ENCODE measurements at regions of chr1 and their contacts with region 1.

Region 1: DNA sequence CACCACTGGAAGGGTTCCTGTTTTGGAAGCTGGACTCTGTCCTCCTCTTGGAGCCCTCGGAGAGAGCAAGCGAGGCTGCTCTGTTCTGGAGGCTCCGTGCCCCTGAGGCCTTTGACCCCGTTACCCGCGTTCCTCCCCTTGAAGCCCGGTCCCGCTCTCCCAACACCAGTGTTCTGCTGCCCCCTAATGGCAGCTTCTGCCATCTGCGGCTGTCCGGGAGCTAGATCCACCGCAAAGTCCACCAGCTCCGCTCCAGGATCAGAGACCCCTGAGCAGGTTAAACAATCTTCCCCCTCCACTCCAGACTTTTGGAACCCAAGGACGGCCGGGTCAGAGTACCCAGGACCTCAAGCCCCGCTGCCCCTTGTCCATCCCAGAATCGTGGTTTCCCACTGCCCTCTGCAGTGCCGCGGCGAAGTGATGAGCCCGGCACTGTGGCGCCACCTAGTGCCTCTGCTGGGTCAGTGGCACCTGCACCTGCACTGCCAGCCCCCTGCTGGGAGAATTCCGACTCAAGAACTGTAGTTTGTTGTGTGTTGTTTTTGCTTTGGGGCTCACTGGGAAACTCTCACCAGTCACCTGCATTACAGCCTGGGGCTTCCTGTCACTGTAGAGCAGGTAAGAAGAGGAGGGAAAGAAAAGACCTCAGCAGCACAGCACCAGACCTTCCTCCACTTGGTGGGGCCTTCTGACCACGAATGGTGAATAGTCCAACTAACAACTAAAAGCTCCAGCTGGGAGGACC is 63.5 kb upstream of the NFASC start:
- DNase-seq: peak; percentile 68 to 91 (median 77)
- ATAC-seq: peak; percentile 95
- H3K4me3 ChIP-seq: peak overlapping the region; percentile 59
- H3K4me3 Mint-ChIP-seq: peak overlapping the region; percentile 92
- H3K27ac ChIP-seq: no peak overlapping the region
- H3K27ac Mint-ChIP-seq: no peak overlapping the region
- H3K4me1 ChIP-seq: peaks cover 20% of the 10 kb centered on the region
- H3K4me1 Mint-ChIP-seq: peaks cover 6% of the 10 kb centered on the region
- H3K27me3 ChIP-seq: no peaks in the 10 kb centered on the region
- H3K27me3 Mint-ChIP-seq: no peaks in the 10 kb centered on the region
- CTCF ChIP-seq: peak; percentile 100

Region 2: GRCh38 chr1:204151552-204152309 is 655.4 kb before region 1 on chr1 and contains the start of gene ETNK2:
- CTCF ChIA-PET with region 1: no interaction called
- POLR2A ChIA-PET with region 1: no interaction called
- intact Hi-C with region 1: loop called in 1 of 2 experiments (anchors 10 kb)
- DNase-seq: peak; percentile 22 to 81 (median 48)
- ATAC-seq: peak; percentile 86
- H3K4me3 ChIP-seq: peak within 1 kb of the TSS; percentile 65
- H3K4me3 Mint-ChIP-seq: peak within 1 kb of the TSS; percentile 81
- H3K27ac ChIP-seq: no peak within 1 kb of the TSS
- H3K27ac Mint-ChIP-seq: peak within 1 kb of the TSS; percentile 49
- H3K4me1 ChIP-seq: peaks cover 18% of the 10 kb centered on the region
- H3K4me1 Mint-ChIP-seq: peaks cover 11% of the 10 kb centered on the region
- H3K27me3 ChIP-seq: peaks cover 0 to 7% of the 10 kb centered on the region in 2 experiments
- H3K27me3 Mint-ChIP-seq: peaks cover 6% of the 10 kb centered on the region
- CTCF ChIP-seq: no peak
- total RNA-seq, gene ETNK2: 11.7 to 12.9 TPM

Region 3: DNA sequence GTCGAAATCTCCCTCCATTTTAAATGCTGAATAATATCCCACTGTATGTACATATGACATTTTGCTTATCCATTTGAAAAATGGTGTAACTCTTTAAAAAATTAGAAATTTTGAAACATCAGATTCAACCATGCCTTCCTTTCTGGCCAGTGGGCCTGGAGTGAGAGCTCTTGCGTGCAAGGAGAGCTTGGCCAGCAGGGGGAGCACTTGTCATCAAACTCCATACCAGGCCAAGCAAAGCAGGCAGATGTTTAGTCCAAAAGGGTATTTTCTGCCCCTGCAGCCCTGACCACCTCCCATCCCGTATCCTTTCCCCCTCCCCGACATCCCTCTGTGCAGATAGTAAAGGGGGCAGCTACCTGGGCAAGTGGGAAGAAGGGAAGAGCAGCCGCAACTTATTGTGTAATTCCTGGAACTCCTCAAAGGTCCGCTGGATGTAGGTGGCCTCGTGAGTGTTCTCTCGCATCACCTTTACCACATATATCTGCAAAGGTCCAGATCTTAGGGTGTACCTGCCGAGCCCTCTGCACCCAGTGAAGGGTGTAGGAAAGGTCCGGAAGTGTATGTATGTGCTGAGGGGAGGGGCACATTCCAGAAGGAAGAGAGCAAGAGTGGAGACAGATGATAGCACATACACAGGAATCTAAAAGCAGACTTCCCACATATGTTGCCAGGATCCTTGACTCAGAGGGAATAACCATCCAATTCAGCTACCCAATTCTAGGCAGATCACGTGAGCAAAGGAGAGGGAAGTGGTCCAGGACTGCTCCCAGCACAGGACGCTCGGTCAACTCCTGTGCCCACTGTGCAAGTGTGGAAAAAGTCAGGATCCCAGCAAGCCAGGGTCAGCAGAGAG is 375.6 kb before region 1 on chr1:
- CTCF ChIA-PET with region 1: interaction called, 9 read pairs
- POLR2A ChIA-PET with region 1: no interaction called
- intact Hi-C with region 1: loop called (anchors 1 to 5 kb)
- DNase-seq: peak; percentile 68 to 90 (median 76)
- ATAC-seq: peak; percentile 90
- H3K4me3 ChIP-seq: no peak overlapping the region
- H3K4me3 Mint-ChIP-seq: no peak overlapping the region
- H3K27ac ChIP-seq: no peak overlapping the region
- H3K27ac Mint-ChIP-seq: no peak overlapping the region
- H3K4me1 ChIP-seq: peaks cover 3% of the 10 kb centered on the region
- H3K4me1 Mint-ChIP-seq: no peaks in the 10 kb centered on the region
- H3K27me3 ChIP-seq: no peaks in the 10 kb centered on the region
- H3K27me3 Mint-ChIP-seq: no peaks in the 10 kb centered on the region
- CTCF ChIP-seq: peak; percentile 97

Region 4: GRCh38 chr1:204446370-204447111 is 360.6 kb before region 1 on chr1:
- CTCF ChIA-PET with region 1: interaction called, 4 read pairs
- POLR2A ChIA-PET with region 1: no interaction called
- intact Hi-C with region 1: loop called (anchors 5 kb)
- DNase-seq: peak; percentile 69 to 89 (median 74)
- ATAC-seq: peak; percentile 98
- H3K4me3 ChIP-seq: no peak overlapping the region
- H3K4me3 Mint-ChIP-seq: no peak overlapping the region
- H3K27ac ChIP-seq: no peak overlapping the region
- H3K27ac Mint-ChIP-seq: peak overlapping the region; percentile 81
- H3K4me1 ChIP-seq: peaks cover 38% of the 10 kb centered on the region
- H3K4me1 Mint-ChIP-seq: peaks cover 22% of the 10 kb centered on the region
- H3K27me3 ChIP-seq: no peaks in the 10 kb centered on the region
- H3K27me3 Mint-ChIP-seq: no peaks in the 10 kb centered on the region
- CTCF ChIP-seq: peak; percentile 74

Region 5: GRCh38 chr1:204565617-204566582 is 241.2 kb before region 1 on chr1:
- CTCF ChIA-PET with region 1: interaction called, 13 read pairs
- POLR2A ChIA-PET with region 1: interaction called, 3 read pairs
- intact Hi-C with region 1: loop called (anchors 1 to 2 kb)
- DNase-seq: peak; percentile 24 to 85 (median 43)
- ATAC-seq: peak; percentile 87
- H3K4me3 ChIP-seq: no peak overlapping the region
- H3K4me3 Mint-ChIP-seq: no peak overlapping the region
- H3K27ac ChIP-seq: no peak overlapping the region
- H3K27ac Mint-ChIP-seq: peak overlapping the region; percentile 80
- H3K4me1 ChIP-seq: peaks cover 37% of the 10 kb centered on the region
- H3K4me1 Mint-ChIP-seq: peaks cover 54% of the 10 kb centered on the region
- H3K27me3 ChIP-seq: no peaks in the 10 kb centered on the region
- H3K27me3 Mint-ChIP-seq: no peaks in the 10 kb centered on the region
- CTCF ChIP-seq: peak; percentile 66

Region 6: GRCh38 chr1:204791453-204792353 is 15.4 kb before region 1 on chr1:
- CTCF ChIA-PET with region 1: interaction called, 30 read pairs
- POLR2A ChIA-PET with region 1: interaction called, 3 read pairs
- intact Hi-C with region 1: loop called (anchors 2 kb)
- DNase-seq: peak; percentile 68 to 91 (median 79)
- ATAC-seq: peak; percentile 91
- H3K4me3 ChIP-seq: no peak overlapping the region
- H3K4me3 Mint-ChIP-seq: no peak overlapping the region
- H3K27ac ChIP-seq: no peak overlapping the region
- H3K27ac Mint-ChIP-seq: no peak overlapping the region
- H3K4me1 ChIP-seq: no peaks in the 10 kb centered on the region
- H3K4me1 Mint-ChIP-seq: no peaks in the 10 kb centered on the region
- H3K27me3 ChIP-seq: peaks cover 0 to 6% of the 10 kb centered on the region in 2 experiments
- H3K27me3 Mint-ChIP-seq: peaks cover 45% of the 10 kb centered on the region
- CTCF ChIP-seq: peak; percentile 84